Ascending aorta (tissue), 2 donors: ENCODE measurements at regions of chr17 and their contacts with region 1.

Region 1: DNA sequence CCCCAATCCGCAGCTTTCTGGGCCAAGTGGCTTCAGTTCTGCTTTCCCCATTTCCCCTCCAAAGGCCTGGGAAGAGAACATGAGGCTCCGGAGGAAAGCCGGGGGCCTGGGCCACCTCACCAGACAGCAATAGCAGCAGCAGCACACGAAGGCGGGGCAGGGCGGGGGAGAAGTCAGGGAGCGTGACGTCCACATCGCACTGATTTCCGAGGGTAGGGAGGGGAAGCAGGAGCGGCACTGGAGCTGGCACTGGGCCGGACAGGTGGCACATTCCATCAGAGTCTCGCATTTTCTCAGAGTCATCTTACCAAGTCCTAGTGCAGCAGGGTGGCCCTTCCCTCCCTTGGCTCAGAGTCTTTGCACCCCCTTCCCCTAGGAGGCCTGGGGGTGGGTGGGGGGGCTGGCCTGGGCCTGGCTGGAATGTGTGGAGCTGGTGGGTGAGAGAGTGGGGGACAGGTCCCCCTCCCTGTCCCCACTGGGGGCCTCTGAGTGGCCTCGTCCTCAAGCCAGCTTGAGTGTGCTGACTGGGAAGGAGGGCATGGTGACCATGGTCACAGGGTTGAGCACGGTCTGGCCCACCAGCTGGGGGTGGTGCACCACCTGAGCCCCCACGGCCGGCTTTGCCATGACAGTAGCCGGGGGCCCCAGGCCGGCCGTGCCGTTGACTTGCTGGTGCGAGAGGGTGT is 14.3 kb downstream of the MNT start:
- DNase-seq: no peak
- H3K4me3 ChIP-seq: no peak overlapping the region
- H3K27ac ChIP-seq: no peak overlapping the region
- H3K4me1 ChIP-seq: peaks cover 0 to 18% of the 10 kb centered on the region in 2 donors
- H3K27me3 ChIP-seq: no peaks in the 10 kb centered on the region
- CTCF ChIP-seq: no peak

Region 2: GRCh38 chr17:2347547-2348307 is 38.8 kb before region 1 on chr17:
- intact Hi-C with region 1: no loop called
- DNase-seq: no peak
- H3K4me3 ChIP-seq: no peak overlapping the region
- H3K27ac ChIP-seq: no peak overlapping the region
- H3K4me1 ChIP-seq: no peaks in the 10 kb centered on the region
- H3K27me3 ChIP-seq: no peaks in the 10 kb centered on the region
- CTCF ChIP-seq: no peak

Region 3: DNA sequence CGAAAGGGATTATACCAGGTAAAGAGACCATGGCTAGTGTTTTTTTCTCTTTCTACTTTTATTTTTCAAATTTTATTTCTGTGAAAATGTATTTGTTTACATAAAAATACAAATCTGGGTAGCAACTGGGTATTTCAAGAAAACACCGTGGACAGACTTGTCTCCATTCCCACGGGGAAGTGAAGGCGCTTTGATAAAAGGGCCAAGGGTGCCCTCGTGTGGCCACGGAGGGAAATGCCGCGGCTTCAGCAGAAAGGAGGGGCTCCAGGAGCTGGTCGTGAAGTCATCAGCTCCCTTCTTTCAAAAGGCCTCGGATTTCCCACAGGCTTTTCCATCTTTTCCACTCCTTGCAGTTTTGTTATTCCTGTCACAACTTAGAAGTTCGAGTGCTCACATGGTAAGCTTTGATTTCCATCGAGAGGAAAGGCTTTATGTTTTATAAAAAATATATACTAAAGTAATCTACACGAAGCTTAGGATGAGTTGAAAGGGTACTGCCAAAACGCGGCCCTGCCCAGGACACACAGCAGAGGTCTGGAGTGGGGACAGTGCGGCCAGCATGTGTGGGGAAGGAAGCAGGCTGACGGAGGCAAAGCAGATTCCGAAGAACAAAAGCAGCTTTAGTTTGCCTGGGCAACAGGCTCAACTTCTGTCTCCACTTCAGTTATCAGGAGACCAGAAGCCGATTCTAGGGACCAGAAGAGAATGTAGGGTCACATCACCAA is 29.6 kb after region 1 on chr17:
- intact Hi-C with region 1: loop called (anchors 1 kb)
- DNase-seq: peak; percentile 68 to 97
- H3K4me3 ChIP-seq: no peak overlapping the region
- H3K27ac ChIP-seq: peak overlapping the region; percentile 4 to 71
- H3K4me1 ChIP-seq: peaks cover 3 to 19% of the 10 kb centered on the region in 2 donors
- H3K27me3 ChIP-seq: no peaks in the 10 kb centered on the region
- CTCF ChIP-seq: peak; percentile 89 to 95 (median 95)